Left ventricle myocardium superior (tissue), 1 donor: ENCODE measurements at regions of chr20 and their contacts with region 1.

Region 1: DNA sequence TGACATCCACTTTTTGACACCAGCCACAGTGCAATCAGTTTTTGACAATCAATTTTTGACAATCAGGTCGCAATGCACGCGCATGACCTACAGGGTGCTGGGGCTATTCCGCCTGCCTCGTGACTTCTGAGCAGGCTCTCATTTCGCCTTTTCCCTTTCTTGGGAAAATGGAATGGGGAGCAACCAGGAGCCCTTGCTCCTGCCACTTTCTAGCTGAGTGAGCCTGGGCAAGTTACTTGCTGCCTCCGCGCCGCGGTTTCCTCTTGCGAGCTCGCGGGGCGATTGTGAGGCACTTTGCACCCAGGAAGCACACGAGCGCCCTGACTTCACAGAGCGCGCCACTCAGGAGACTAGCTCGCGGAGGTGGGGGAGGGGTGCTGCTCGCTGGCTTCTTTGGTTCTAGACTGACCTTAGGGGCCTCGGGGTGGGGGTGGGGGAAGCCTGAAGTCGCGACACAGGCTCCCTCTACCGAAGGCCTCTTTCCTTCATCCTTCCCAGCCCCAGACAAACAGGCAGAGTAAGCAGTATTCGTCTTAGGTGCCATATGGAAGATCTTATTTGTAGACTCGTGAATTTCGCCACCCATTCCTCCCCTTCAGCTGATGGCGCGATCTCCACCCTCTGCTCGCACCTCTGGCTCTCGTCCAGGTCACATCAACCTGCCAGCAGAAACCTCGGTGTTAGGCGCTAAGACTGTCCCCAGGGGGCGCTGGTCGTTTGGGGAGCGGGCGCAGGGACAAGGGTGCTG is 4.6 kb downstream of the TP53TG5 start:
- DNase-seq: peak; percentile 91
- ATAC-seq: peak; percentile 92

Region 2: GRCh38 chr20:45157962-45158361 is 215.6 kb before region 1 on chr20:
- intact Hi-C with region 1: no loop called
- DNase-seq: no peak
- ATAC-seq: no peak

Region 3: DNA sequence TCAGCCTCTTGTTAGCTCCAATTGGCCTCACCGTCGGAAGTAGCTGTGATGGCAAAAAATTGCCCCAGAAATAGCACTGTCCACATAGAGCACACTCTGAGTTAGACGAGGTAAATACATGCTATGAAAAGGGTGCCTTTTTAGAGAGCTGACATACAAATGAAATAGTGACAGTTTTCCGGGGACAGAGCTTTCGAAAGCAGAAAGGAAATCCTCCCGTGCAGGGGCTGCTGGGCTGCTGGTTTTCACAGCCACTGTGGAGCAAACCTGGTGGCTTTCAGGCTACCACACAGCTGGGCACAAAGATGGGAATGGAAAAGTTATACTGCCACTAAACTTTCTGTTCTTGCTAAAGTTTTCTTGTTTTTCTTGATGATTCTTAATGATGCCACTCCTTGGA is 127.4 kb before region 1 on chr20:
- intact Hi-C with region 1: no loop called
- DNase-seq: no peak
- ATAC-seq: no peak

Region 4: GRCh38 chr20:45300961-45301360 is 72.6 kb before region 1 on chr20:
- intact Hi-C with region 1: no loop called
- DNase-seq: no peak
- ATAC-seq: no peak

Region 5: GRCh38 chr20:45436732-45437391 is 63.3 kb after region 1 on chr20:
- intact Hi-C with region 1: loop called (anchors 10 kb)
- DNase-seq: peak; percentile 94
- ATAC-seq: peak; percentile 94